Aorta (tissue), 5 donors: ENCODE measurements at regions of chr17 and their contacts with region 1.

Region 1: DNA sequence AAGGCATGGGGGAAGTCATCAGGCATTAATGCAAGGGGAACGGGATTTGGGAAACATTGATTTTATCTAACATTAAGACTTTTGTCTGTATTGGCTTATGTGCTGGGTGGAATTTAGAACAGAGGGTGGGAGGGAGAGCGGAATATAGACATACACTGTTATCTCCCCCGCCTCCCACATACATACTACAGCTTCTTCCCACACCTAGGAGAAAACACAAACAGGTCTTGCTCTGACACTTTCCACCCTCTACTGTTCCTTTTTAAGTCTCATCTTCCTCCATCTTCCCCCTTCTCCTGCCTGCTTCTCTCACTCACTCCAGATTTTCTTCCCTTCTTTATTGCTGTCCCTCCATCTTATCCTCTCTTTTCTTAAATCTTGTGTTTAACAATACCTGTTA is 425 bp downstream of the OR4D1 start:
- DNase-seq: no peak
- ATAC-seq: no peak
- H3K4me3 ChIP-seq: no peak overlapping the region
- H3K27ac ChIP-seq: no peak overlapping the region
- H3K4me1 ChIP-seq: no peaks in the 10 kb centered on the region
- H3K27me3 ChIP-seq: no peaks in the 10 kb centered on the region

Region 2: GRCh38 chr17:58066401-58066800 is 82.2 kb before region 1 on chr17:
- intact Hi-C with region 1: loop called in 1 of 2 experiments (anchors 5 kb)
- DNase-seq: no peak
- ATAC-seq: no peak
- H3K4me3 ChIP-seq: no peak overlapping the region
- H3K27ac ChIP-seq: no peak overlapping the region
- H3K4me1 ChIP-seq: no peaks in the 10 kb centered on the region
- H3K27me3 ChIP-seq: no peaks in the 10 kb centered on the region

Region 3: DNA sequence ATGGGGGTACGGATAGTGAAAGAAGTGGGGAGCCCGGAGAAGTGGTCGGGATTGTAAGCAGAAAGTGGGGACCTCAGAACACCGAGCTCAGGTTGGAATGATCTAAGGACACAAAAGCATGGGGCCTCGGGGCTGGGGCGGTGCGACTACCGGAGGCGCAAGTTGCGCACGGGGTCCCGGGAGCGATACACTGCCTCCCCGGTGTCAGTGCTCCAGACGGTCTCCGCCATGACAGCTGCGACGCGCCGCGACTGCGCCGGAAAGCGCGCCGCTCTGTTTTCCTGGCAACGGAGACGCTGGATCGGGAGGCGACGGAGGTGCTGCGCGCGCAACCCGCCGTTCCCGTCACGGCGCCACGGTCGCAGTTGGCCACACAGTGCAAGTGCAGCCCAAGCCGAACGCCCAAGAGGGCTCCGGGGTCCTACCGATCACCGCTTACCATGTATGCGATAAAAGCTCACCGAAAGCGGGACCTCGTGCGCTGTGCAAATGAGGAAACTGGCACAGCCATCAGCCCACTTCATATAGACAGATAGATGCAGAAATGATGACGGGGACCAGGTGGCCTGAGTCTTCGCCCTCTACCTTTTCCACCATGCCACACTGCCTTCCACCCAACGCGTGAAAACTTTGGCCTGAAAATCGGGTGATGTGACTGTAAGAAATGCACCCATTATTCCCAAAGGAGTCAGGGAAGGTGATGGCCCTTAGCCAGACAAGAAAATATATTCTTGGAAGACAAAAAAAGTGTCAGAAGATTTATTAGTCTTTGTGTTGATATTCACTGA is 70.6 kb after region 1 on chr17 and contains the start of gene MKS1:
- intact Hi-C with region 1: no loop called
- DNase-seq: peak; percentile 97 to 99
- ATAC-seq: peak; percentile 99
- H3K4me3 ChIP-seq: peak within 1 kb of the TSS; percentile 52 to 65
- H3K27ac ChIP-seq: peak within 1 kb of the TSS in 1 of 2 donors; percentile 39
- H3K4me1 ChIP-seq: no peaks in the 10 kb centered on the region
- H3K27me3 ChIP-seq: no peaks in the 10 kb centered on the region
- total RNA-seq, gene MKS1: 10.1 to 13.3 TPM